Activated T-helper 1 cell treated with anti-CD3 and anti-CD28 coated beads, Interleukin-12 subunit alpha, Interleukin-12 subunit beta, Interleukin-2, Interleukin-4 antibody, amounts not matched to agents 30 ng/mL and 10 ng/mL and 1 ng/mL, durations not matched to agents 14 hours and 24 hours and 36 hours (primary cell): ENCODE measurements at regions of chr10 and their contacts with region 1.

Region 1: GRCh38 chr10:26860443-26861204 is at the start of gene ABI1:
- DNase-seq: peak; percentile 97
- H3K4me3 Mint-ChIP-seq: peak within 1 kb of the TSS; percentile 97
- H3K27ac Mint-ChIP-seq: peak within 1 kb of the TSS; percentile 100
- H3K4me1 Mint-ChIP-seq: peaks cover 39% of the 10 kb centered on the region
- H3K27me3 Mint-ChIP-seq: peaks cover 15% of the 10 kb centered on the region
- total RNA-seq, gene ABI1: 66.6 and 68.0 TPM in 2 replicates

Region 2: DNA sequence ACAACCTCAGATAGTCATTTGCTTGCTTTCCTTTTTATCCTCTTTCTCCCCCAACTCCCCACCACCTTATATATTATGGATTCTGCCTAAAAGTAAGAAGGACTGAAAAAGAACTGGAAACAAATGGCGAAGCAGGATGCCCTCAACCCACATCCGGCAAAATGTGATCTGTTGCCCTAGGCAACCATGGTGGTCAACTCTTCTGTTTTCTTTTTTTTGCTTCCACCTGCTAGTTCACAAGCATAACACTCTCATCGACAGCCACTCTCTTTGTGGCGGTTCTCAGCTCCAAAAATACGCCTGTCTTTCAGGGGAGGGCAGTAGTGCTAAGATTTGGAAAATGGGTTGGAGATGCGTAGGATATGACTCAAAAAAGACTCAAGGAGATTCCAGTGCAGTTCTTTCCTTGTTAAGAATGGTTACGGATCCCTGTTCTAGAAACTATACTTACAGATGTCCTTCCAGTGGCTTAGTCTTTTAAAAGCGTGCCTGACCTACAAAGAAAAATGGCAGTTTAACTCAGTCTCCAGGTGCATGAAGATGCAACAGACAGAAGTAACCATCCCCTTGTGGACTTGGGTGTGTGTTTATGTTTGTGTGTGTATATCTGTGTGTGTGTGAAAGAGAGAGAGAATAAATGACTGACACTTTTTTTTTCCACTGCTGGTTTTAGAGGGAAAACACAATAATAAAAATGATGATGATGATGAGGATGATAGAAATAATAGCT is 411.8 kb before region 1 on chr10:
- intact Hi-C with region 1: loop called (anchors 5 kb)
- DNase-seq: peak; percentile 79
- H3K4me3 Mint-ChIP-seq: peak overlapping the region; percentile 68
- H3K27ac Mint-ChIP-seq: peak overlapping the region; percentile 93
- H3K4me1 Mint-ChIP-seq: peaks cover 67% of the 10 kb centered on the region
- H3K27me3 Mint-ChIP-seq: no peaks in the 10 kb centered on the region

Region 3: DNA sequence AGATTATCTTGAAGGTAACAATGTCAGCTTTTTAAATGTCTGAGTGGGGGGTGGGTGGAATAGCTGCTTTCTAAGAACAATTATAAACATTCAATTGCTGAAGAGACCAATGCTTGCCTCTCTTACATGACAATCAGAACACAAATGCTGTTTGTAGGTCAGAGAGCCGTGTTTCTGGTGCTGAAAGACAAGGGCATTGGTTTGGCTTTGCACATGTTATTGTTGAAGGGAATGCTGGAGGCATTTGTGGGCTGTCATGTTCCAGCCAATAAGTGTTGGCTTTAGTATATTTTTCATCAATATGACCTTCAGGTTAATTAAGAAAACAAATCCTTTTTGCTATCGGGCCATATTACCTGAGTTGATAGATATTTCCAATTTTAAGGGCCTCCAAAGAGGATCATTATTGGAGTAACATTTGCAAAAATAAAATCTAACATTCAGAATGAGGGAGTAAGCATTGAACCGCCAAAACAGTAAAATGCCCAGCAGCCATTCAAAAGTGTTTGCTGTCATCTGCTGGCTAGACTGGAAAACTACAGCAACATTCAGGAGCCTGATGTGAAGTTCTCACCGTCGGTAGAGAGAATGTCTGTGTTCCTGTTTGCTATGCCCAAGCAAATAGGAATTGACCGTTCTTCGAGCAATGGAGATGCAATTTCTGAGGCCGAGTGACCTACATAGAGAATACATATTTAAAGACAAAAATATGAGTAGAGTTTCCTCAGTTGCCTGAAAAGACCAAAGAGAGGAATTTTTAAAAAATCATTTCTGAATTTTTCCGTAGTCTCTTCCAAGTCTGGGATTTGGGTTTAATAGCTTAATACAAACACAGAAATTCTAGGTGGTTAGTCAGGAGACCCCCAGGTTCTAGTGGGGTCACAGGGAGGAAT is 303.6 kb before region 1 on chr10:
- intact Hi-C with region 1: no loop called
- DNase-seq: no peak
- H3K4me3 Mint-ChIP-seq: no peak overlapping the region
- H3K27ac Mint-ChIP-seq: no peak overlapping the region
- H3K4me1 Mint-ChIP-seq: peaks cover 8% of the 10 kb centered on the region
- H3K27me3 Mint-ChIP-seq: no peaks in the 10 kb centered on the region

Region 4: GRCh38 chr10:26725837-26726727 is 134.5 kb before region 1 on chr10:
- intact Hi-C with region 1: loop called (anchors 1 kb)
- DNase-seq: no peak
- H3K4me3 Mint-ChIP-seq: no peak overlapping the region
- H3K27ac Mint-ChIP-seq: peak overlapping the region; percentile 42
- H3K4me1 Mint-ChIP-seq: peaks cover 15% of the 10 kb centered on the region
- H3K27me3 Mint-ChIP-seq: no peaks in the 10 kb centered on the region

Region 5: DNA sequence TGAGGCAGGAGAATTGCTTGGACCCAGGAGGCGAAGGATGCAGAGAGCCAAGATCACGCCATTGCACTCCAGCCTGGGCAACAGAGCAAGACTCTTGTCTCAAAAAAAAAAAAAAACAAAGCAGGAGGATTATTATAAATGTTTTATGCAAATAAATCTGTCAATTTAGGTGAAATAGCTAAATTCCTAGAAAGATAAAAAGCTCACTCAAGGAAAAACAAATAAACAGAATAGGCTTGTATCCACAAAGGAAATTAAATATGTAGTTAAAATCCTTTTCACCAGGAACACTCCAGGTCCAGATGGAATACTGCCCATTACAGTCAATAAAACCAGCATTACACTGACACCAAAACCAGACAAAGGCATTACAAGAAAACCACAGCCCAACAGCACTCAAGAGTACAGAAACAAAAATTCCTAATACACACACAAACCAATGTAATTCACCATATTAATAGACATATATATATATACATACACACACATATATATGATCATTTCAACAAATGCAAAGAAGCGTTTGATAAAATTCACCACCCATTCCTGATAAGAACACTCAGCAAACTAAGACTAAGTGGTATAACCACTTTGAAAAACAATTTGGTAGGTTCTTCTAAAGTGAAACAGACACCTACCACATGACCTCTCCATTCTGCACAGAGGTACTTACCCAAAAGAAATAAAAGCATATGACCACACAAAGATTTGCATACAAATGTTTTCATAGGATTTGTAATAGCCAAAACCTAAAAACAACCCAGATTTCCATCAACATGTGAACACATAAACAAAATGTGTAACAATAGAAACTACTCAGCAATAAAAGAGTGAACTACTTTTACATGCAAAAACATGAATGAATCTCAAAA is 38.7 kb before region 1 on chr10:
- intact Hi-C with region 1: loop called (anchors 1 kb)
- DNase-seq: no peak
- H3K4me3 Mint-ChIP-seq: no peak overlapping the region
- H3K27ac Mint-ChIP-seq: peak overlapping the region; percentile 64
- H3K4me1 Mint-ChIP-seq: peaks cover 44% of the 10 kb centered on the region
- H3K27me3 Mint-ChIP-seq: no peaks in the 10 kb centered on the region

Region 6: GRCh38 chr10:26946102-26946811 is 85.6 kb after region 1 on chr10:
- intact Hi-C with region 1: no loop called
- DNase-seq: no peak
- H3K4me3 Mint-ChIP-seq: no peak overlapping the region
- H3K27ac Mint-ChIP-seq: no peak overlapping the region
- H3K4me1 Mint-ChIP-seq: no peaks in the 10 kb centered on the region
- H3K27me3 Mint-ChIP-seq: peaks cover 8% of the 10 kb centered on the region

Region 7: GRCh38 chr10:26960308-26960707 is 99.7 kb after region 1 on chr10:
- intact Hi-C with region 1: no loop called
- DNase-seq: no peak
- H3K4me3 Mint-ChIP-seq: no peak overlapping the region
- H3K27ac Mint-ChIP-seq: no peak overlapping the region
- H3K4me1 Mint-ChIP-seq: no peaks in the 10 kb centered on the region
- H3K27me3 Mint-ChIP-seq: no peaks in the 10 kb centered on the region

Region 8: DNA sequence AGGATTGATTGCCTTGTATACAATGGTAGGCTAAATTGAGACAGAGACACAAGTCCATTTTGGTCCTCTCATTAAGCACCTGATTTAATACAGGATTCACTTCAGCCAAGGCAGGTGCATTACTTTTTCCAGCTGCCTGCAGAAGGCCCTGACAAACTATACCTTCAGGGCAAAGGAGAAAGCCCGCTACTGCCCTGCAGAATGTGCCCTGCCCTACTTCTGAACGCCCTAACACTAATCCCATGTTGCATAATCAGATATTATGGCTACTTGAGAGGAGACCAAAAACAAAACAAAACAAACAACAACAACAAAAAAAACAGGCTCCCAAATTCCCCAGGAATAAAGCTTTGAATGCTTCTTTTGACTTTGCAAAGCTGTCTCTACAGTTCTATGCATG is 117.0 kb after region 1 on chr10:
- intact Hi-C with region 1: no loop called
- DNase-seq: no peak
- H3K4me3 Mint-ChIP-seq: no peak overlapping the region
- H3K27ac Mint-ChIP-seq: no peak overlapping the region
- H3K4me1 Mint-ChIP-seq: peaks cover 7% of the 10 kb centered on the region
- H3K27me3 Mint-ChIP-seq: no peaks in the 10 kb centered on the region

Region 9: GRCh38 chr10:27099916-27100812 is 239.5 kb after region 1 on chr10 and contains the start of gene ANKRD26:
- intact Hi-C with region 1: loop called (anchors 1 kb)
- DNase-seq: peak; percentile 96
- H3K4me3 Mint-ChIP-seq: peak within 1 kb of the TSS; percentile 86
- H3K27ac Mint-ChIP-seq: peak within 1 kb of the TSS; percentile 98
- H3K4me1 Mint-ChIP-seq: peaks cover 43% of the 10 kb centered on the region
- H3K27me3 Mint-ChIP-seq: no peaks in the 10 kb centered on the region
- total RNA-seq, gene ANKRD26: 4.3 and 7.0 TPM in 2 replicates

Region 10: GRCh38 chr10:27504007-27504807 is 643.6 kb after region 1 on chr10 and contains the start of gene RAB18:
- intact Hi-C with region 1: loop called (anchors 1 kb)
- DNase-seq: peak; percentile 98
- H3K4me3 Mint-ChIP-seq: peak within 1 kb of the TSS; percentile 96
- H3K27ac Mint-ChIP-seq: peak within 1 kb of the TSS; percentile 96
- H3K4me1 Mint-ChIP-seq: peaks cover 38% of the 10 kb centered on the region
- H3K27me3 Mint-ChIP-seq: no peaks in the 10 kb centered on the region
- total RNA-seq, gene RAB18: 61.6 and 63.7 TPM in 2 replicates

Region 11: DNA sequence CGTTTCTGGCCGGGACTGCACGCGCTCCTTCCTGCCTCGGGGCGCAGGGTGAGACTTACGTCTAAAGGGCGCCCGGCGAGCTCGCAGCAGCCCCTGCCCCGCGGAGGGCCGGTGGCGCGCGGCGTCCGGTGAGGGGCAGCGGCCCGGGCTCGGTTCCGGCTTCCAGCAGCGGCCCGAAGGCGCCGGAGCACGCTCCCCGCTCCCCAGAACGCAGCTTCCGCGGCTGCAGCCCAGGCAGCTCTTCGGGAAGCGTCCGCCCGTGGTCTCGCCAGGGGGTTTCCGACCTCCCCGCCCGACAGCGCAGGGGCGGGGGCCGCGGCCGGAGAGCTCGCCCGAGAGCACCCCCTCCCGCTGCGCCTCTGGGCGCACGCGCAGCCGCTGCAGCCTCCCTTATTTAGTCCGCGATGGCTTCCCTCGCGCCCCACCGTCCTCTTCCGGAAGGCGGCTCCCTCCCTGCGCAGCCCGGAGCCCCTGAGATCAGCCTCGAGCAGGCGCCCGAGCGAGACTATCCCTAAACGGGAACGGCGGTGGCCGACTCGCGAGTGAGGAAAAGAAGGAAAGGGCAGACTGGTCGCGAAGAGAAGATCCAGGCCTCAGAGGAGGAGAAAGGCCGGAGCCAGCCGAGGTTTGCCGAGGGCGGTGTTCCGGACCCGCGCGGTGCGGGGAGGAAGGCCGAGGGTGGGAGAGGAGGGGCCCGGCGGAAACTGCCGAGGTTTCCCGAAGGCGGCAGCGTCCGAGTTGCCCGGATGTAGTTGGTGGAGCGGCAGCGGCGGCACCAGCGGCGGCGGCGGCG is 1672.0 kb after region 1 on chr10 and contains the start of gene WAC:
- intact Hi-C with region 1: loop called (anchors 2 kb)
- DNase-seq: peak; percentile 94
- H3K4me3 Mint-ChIP-seq: peak within 1 kb of the TSS; percentile 97
- H3K27ac Mint-ChIP-seq: peak within 1 kb of the TSS; percentile 100
- H3K4me1 Mint-ChIP-seq: peaks cover 54% of the 10 kb centered on the region
- H3K27me3 Mint-ChIP-seq: no peaks in the 10 kb centered on the region
- total RNA-seq, gene WAC: 130 and 135 TPM in 2 replicates